ENCODE measurements at regions of chr12 and their contacts with region 1.

Region 1: GRCh38 chr12:82826505-82826904 is 139.8 kb downstream of the TMTC2 start:
- DNase-seq: no peak
- H3K4me3 ChIP-seq: no peak overlapping the region
- H3K27ac ChIP-seq: no peak overlapping the region
- H3K4me1 ChIP-seq: no peaks in the 10 kb centered on the region
- H3K27me3 ChIP-seq: no peaks in the 10 kb centered on the region
- CTCF ChIP-seq: no peak
- POLR2A ChIP-seq: no peak

Region 2: GRCh38 chr12:82952946-82953345 is 126.4 kb after region 1 on chr12:
- intact Hi-C with region 1: loop called (anchors 5 kb)
- DNase-seq: no peak
- H3K4me3 ChIP-seq: no peak overlapping the region
- H3K27ac ChIP-seq: no peak overlapping the region
- H3K4me1 ChIP-seq: no peaks in the 10 kb centered on the region
- H3K27me3 ChIP-seq: no peaks in the 10 kb centered on the region
- CTCF ChIP-seq: no peak
- POLR2A ChIP-seq: no peak